Lower leg skin (tissue), 4 donors: ENCODE measurements at regions of chr6 and their contacts with region 1.

Region 1: DNA sequence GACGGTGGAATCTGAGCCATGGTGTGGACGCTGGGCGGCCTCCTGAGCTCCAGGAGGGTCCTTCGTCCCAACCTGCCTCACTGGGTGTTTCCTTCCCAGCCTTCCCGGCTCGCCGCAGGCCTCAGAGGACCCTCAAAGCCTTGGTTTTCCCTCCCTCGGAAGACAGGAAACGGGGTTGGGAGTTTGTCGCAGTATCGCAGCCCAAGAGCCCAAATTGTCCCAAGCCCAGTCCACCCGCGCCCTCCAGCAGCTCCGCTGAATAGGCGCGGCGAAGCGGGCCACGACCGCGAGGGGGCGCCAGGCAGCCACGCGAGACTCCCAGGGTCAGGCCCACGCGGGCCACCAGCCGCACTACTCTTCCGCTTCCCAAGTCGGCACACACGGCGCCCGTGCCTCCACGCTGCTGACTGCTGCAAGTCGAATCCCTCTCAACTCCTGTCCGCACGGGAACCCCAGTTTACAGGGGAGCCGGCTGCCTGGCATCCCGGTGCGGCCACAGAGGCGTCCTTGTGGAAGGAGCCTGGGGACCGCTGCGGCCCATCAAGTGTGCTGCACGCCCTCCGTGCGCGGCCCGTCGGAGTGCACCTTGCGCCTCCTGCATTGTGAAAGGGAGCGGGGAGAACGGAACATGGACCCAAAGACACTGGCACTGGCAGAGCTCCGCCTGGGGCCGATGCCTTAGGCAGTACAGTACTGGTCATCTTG is 40.4 kb upstream of the HMGA1 start:
- DNase-seq: peak; percentile 81 to 97
- H3K4me3 ChIP-seq: peak overlapping the region; percentile 22
- CTCF ChIP-seq: peak in 1 of 3 donors; percentile 83
- POLR2A ChIP-seq: no peak

Region 2: GRCh38 chr6:34423254-34423653 is 227.0 kb after region 1 on chr6:
- intact Hi-C with region 1: loop called (anchors 5 kb)
- DNase-seq: no peak
- H3K4me3 ChIP-seq: no peak overlapping the region
- CTCF ChIP-seq: no peak
- POLR2A ChIP-seq: no peak